PC-3 (cell line): ENCODE measurements at regions of chr2 and their contacts with region 1.

Region 1: DNA sequence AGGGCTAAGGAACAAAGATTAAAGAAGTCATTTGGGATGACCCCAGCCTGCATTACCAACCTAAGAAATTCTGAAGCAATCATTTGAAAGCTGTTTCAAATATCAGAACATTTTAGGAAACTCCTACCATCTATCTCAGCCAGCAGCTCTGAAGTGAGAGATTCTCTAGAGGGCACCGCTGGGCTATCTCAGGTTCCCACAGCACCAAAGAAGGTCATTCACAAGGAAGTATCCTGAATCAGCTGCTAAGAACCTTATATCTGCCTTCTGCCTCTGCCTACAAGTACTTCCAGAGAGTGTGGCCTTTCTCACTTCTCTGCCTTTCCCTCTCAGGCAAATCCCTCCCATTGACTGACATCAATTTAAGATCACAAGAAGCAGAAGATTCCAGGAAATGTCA is 13.4 kb upstream of the EVA1A start:
- DNase-seq: peak; percentile 37
- ATAC-seq: peak; percentile 88
- H3K4me3 ChIP-seq: no peak overlapping the region
- H3K27ac ChIP-seq: no peak overlapping the region
- H3K4me1 ChIP-seq: peaks cover 33% of the 10 kb centered on the region
- H3K27me3 ChIP-seq: no peaks in the 10 kb centered on the region
- CTCF ChIP-seq: peak; percentile 51

Region 2: DNA sequence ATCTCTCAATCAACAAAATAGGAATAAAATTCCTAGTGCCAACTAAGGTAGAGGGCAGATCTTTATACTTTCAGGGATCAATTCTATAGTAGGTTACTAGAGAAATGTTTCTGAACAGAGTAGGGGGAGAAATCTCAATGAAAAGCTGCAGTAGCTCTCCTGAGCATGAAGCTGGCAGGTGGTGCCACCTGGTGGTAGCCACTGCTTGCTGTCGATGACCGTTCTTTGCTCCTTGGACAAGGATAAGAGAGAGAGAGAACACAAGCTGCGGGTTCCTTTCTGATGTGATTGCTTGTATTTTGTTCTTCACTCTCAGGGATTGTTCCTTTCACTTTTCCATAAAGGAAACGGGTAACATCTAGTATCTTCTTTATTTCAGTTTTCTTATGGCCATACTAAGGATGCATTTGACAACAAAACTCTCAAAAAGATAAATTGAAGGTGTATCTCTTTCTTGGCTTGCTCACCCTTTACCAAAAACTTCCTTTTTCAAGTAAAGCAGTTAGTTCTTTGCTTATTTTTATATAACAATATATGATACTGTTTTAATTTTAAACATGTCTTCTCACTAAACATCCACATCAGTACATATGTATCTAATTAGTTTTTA is 53.9 kb after region 1 on chr2:
- CTCF ChIA-PET with region 1: interaction called, 10 read pairs
- POLR2A ChIA-PET with region 1: no interaction called
- intact Hi-C with region 1: loop called (anchors 1 kb)
- DNase-seq: peak; percentile 90
- ATAC-seq: peak; percentile 96
- H3K4me3 ChIP-seq: no peak overlapping the region
- H3K27ac ChIP-seq: no peak overlapping the region
- H3K4me1 ChIP-seq: no peaks in the 10 kb centered on the region
- H3K27me3 ChIP-seq: no peaks in the 10 kb centered on the region
- CTCF ChIP-seq: peak; percentile 96